ENCODE measurements at regions of chr16 and their contacts with region 1.

Region 1: GRCh38 chr16:89026121-89026612 is 49.2 kb upstream of the CBFA2T3 start:
- DNase-seq: peak; percentile 82
- ATAC-seq: peak; percentile 99
- H3K4me3 Mint-ChIP-seq: no peak overlapping the region
- H3K27ac Mint-ChIP-seq: peak overlapping the region; percentile 90
- H3K4me1 Mint-ChIP-seq: peaks cover 24% of the 10 kb centered on the region
- H3K27me3 Mint-ChIP-seq: peaks cover 3% of the 10 kb centered on the region

Region 2: DNA sequence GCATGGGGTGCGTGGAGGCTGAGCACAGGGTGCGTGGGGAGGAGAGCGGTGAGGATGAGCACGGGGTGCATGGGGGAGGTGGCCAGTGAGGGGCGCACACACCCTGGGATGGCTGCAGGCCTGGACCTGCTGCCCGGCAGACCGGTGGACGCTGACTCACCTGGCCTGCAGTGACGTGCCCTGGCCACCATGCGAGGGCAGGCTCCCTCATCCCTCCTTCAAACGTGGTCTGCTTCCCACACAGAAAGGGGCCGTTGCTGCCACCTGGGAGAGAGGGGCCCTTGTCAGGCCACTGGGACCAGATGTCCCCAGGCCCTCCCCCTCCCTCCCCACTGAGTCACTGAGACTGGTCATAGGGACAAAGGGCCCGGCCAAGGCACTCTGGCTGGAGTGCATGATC is 194.3 kb before region 1 on chr16:
- CTCF ChIA-PET with region 1: no interaction called
- POLR2A ChIA-PET with region 1: no interaction called
- intact Hi-C with region 1: no loop called
- DNase-seq: no peak
- ATAC-seq: no peak
- H3K4me3 Mint-ChIP-seq: no peak overlapping the region
- H3K27ac Mint-ChIP-seq: no peak overlapping the region
- H3K4me1 Mint-ChIP-seq: no peaks in the 10 kb centered on the region
- H3K27me3 Mint-ChIP-seq: no peaks in the 10 kb centered on the region

Region 3: GRCh38 chr16:88999457-89000206 is 26.5 kb before region 1 on chr16:
- CTCF ChIA-PET with region 1: interaction called, 4 read pairs
- POLR2A ChIA-PET with region 1: no interaction called
- intact Hi-C with region 1: loop called (anchors 1 to 5 kb)
- DNase-seq: peak; percentile 67
- ATAC-seq: peak; percentile 83
- H3K4me3 Mint-ChIP-seq: peak overlapping the region; percentile 23
- H3K27ac Mint-ChIP-seq: peak overlapping the region; percentile 67
- H3K4me1 Mint-ChIP-seq: peaks cover 11% of the 10 kb centered on the region
- H3K27me3 Mint-ChIP-seq: peaks cover 8% of the 10 kb centered on the region

Region 4: GRCh38 chr16:89093602-89094251 is 67.6 kb after region 1 on chr16 and contains the start of gene ACSF3:
- CTCF ChIA-PET with region 1: no interaction called
- POLR2A ChIA-PET with region 1: no interaction called
- intact Hi-C with region 1: loop called (anchors 1 to 2 kb)
- DNase-seq: peak; percentile 78
- ATAC-seq: peak; percentile 35
- H3K4me3 Mint-ChIP-seq: peak within 1 kb of the TSS; percentile 98
- H3K27ac Mint-ChIP-seq: peak within 1 kb of the TSS; percentile 95
- H3K4me1 Mint-ChIP-seq: peaks cover 45% of the 10 kb centered on the region
- H3K27me3 Mint-ChIP-seq: no peaks in the 10 kb centered on the region
- total RNA-seq, gene ACSF3: 39.7 to 41.7 TPM

Measured in activated CD4-positive, alpha-beta T cell treated with anti-CD3 and anti-CD28 coated beads for 36 hours (primary cell).